Activated B cell treated with CpG ODN at 0.5 μM for 24 hours (primary cell): ENCODE measurements at regions of chr5 and their contacts with region 1.

Region 1: DNA sequence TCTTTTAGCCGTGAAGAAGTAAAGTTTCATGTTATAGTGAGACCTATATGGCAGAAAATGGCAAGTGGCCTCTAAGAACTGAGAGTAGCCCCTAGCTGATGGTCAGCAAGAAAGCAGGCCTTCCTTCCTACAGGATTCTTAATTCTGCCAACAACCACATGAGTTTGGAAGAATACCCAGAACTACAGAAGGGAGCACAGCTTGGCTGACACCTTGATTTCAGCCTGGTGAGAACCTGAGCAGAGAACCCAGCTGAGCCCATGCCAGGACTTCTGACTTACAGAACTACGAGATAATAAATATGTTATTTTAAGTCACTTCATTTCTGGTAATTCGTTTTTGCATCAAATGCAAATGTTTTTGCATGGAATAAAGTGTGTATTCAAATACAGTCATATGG is 5.9 kb upstream of the FBXL17 start:
- DNase-seq: no peak
- ATAC-seq: no peak
- H3K4me3 Mint-ChIP-seq: no peak overlapping the region
- H3K27ac Mint-ChIP-seq: no peak overlapping the region
- H3K4me1 Mint-ChIP-seq: peaks cover 23% of the 10 kb centered on the region
- H3K27me3 Mint-ChIP-seq: no peaks in the 10 kb centered on the region
- CTCF ChIP-seq: no peak

Region 2: DNA sequence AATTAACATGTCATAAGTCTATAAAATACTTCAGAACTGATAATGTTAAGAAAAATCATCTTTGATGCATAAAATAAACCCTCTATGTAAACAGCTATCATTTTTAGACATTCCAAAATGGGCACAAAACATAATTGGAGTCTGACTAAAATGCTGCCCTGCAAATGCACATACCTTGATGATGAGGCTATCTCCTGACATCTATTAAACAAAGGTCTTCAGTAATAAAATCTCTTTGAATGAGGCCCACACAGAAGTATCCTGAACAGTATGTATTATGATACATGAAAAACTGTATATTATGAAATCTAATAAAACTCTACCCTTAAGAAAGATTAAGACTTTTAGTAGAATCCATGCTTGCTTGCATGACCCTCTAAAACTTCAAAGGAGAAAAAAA is 71.9 kb before region 1 on chr5:
- CTCF ChIA-PET with region 1: no interaction called
- POLR2A ChIA-PET with region 1: no interaction called
- intact Hi-C with region 1: no loop called
- DNase-seq: no peak
- ATAC-seq: no peak
- H3K4me3 Mint-ChIP-seq: no peak overlapping the region
- H3K27ac Mint-ChIP-seq: no peak overlapping the region
- H3K4me1 Mint-ChIP-seq: no peaks in the 10 kb centered on the region
- H3K27me3 Mint-ChIP-seq: no peaks in the 10 kb centered on the region
- CTCF ChIP-seq: no peak

Region 3: GRCh38 chr5:108461628-108462367 is 74.0 kb after region 1 on chr5:
- CTCF ChIA-PET with region 1: no interaction called
- POLR2A ChIA-PET with region 1: interaction called, 15 read pairs
- intact Hi-C with region 1: no loop called
- DNase-seq: no peak
- ATAC-seq: no peak
- H3K4me3 Mint-ChIP-seq: no peak overlapping the region
- H3K27ac Mint-ChIP-seq: no peak overlapping the region
- H3K4me1 Mint-ChIP-seq: peaks cover 7% of the 10 kb centered on the region
- H3K27me3 Mint-ChIP-seq: peaks cover 4% of the 10 kb centered on the region
- CTCF ChIP-seq: no peak